ENCODE measurements at regions of chr16 and their contacts with region 1.

Region 1: GRCh38 chr16:22190081-22190775 is 15.8 kb upstream of the EEF2K start:
- DNase-seq: no peak
- ATAC-seq: peak; percentile 75
- H3K4me3 ChIP-seq: peak overlapping the region; percentile 51 to 67
- H3K27ac ChIP-seq: peak overlapping the region; percentile 67
- H3K4me1 ChIP-seq: peaks cover 20 to 32% of the 10 kb centered on the region in 2 experiments
- H3K27me3 ChIP-seq: no peaks in the 10 kb centered on the region
- CTCF ChIP-seq: no peak
- POLR2A ChIP-seq: no peak
- RAD21 ChIP-seq: no peak

Region 2: DNA sequence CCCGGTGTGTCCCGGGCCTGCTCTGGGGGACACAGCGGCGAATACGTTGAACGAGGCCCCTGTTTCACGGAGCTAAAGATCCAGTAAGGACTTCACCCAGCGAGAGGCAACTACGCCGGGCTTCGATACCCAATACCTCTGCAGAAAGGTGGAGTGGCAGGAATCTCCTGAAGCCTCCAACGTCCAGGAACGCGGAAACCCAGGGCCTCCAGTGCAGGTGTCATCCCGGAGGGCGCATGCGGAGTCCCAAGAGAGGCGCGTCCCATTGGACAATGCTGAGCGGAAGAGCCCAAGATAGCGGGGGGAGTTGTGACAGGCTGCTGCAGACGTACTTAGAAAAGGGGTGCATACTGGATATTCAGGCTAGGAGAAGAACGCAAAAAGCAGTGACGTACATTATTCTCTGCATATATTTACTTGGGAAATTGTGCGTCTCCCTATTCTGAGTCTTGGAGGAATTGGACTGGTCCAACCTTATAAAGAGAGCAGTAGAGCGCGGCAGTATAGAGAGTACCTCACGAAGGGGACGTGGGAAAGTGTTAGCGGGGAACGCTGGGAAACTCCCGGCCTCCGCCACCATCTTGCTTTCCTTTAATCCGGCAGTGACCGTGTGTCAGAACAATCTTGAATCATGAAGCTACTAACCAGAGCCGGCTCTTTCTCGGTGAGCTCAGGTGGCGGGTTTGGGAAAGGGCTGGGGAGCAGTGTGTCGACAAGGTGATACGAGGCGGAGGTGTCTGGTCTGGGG is 237.3 kb before region 1 on chr16 and contains the start of gene UQCRC2:
- CTCF ChIA-PET with region 1: interaction called, 42 read pairs
- POLR2A ChIA-PET with region 1: interaction called, 8 read pairs
- RAD21 ChIA-PET with region 1: interaction called in 1 of 2 experiments, 5 read pairs
- intact Hi-C with region 1: loop called (anchors 1 kb)
- DNase-seq: peak; percentile 93
- ATAC-seq: peak; percentile 93
- H3K4me3 ChIP-seq: peak within 1 kb of the TSS; percentile 96 to 98
- H3K27ac ChIP-seq: peak within 1 kb of the TSS; percentile 76
- H3K4me1 ChIP-seq: peaks cover 9 to 19% of the 10 kb centered on the region in 2 experiments
- H3K27me3 ChIP-seq: no peaks in the 10 kb centered on the region
- CTCF ChIP-seq: no peak
- POLR2A ChIP-seq: peak; percentile 67
- RAD21 ChIP-seq: no peak
- total RNA-seq, gene UQCRC2: 249 TPM

Region 3: DNA sequence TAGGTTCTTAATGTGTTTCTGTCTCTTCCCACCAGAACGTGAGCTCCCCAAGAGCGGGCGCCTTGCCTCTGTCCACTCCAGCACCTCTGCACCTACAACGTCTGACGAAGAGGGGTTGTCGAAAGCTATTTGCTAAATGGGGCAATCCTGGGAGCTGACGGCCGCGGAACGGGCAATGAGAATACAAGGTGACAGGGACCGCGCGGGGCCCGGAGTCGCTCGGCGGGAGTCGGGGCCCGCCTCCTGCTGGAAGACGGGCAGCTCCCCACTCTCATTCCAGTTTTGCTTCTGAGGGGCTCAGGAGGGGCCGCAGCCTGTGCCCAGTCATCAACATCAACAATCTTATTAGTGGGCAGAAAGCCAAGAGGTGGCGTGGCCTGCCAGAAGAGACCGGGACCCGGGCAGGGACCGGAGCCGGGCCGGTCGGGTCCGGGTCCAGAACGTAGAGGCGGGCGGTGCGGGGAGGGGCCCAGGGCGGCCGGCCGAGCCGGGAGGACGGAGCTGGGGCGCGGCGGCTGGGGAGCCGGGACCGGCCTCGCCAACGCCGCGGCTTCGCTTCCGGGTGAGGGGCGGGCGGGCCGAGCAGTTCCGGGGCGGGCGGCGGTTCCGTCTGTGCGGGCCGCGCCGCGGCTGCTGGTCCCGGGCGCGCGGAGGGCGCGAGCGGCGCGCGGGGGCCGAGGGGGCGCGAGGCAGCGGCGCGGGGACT is 182.6 kb before region 1 on chr16 and contains the start of gene MOSMO:
- CTCF ChIA-PET with region 1: interaction called, 15 read pairs
- POLR2A ChIA-PET with region 1: interaction called, 4 read pairs
- RAD21 ChIA-PET with region 1: interaction called in 1 of 2 experiments, 7 read pairs
- intact Hi-C with region 1: loop called (anchors 1 kb)
- DNase-seq: no peak
- ATAC-seq: peak; percentile 85
- H3K4me3 ChIP-seq: peak within 1 kb of the TSS; percentile 88 to 90
- H3K27ac ChIP-seq: peak within 1 kb of the TSS; percentile 85
- H3K4me1 ChIP-seq: peaks cover 17 to 42% of the 10 kb centered on the region in 2 experiments
- H3K27me3 ChIP-seq: no peaks in the 10 kb centered on the region
- CTCF ChIP-seq: no peak
- POLR2A ChIP-seq: no peak
- RAD21 ChIP-seq: no peak
- total RNA-seq, gene MOSMO: 27.6 TPM

Region 4: DNA sequence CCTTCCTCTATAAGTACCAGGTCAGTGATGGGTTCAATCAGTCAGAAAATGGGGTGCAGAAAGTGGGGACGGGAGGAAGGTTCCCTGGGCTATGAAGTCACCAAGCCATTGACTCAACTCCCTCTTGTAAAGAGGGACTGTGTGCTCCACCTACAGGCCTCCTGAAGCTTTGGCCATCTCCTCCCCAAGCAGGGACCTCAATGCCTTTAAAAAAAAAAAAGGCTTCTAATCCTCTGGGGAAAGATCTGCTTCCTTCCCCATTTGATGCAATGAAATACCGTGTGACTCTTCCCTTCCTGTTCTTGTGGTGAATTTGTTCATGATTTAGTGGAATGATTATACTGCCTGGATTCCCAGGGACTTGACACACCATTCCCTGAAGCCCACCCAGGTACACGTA is 67.1 kb before region 1 on chr16:
- CTCF ChIA-PET with region 1: interaction called, 3 read pairs
- POLR2A ChIA-PET with region 1: no interaction called
- RAD21 ChIA-PET with region 1: no interaction called
- intact Hi-C with region 1: loop called (anchors 10 kb)
- DNase-seq: peak; percentile 2
- ATAC-seq: peak; percentile 84
- H3K4me3 ChIP-seq: no peak overlapping the region
- H3K27ac ChIP-seq: no peak overlapping the region
- H3K4me1 ChIP-seq: no peaks in the 10 kb centered on the region
- H3K27me3 ChIP-seq: no peaks in the 10 kb centered on the region; the same call in 1 of the 2 replicates
- CTCF ChIP-seq: peak; percentile 6 to 35 (median 33); a peak in 4 of 6 replicates
- POLR2A ChIP-seq: no peak
- RAD21 ChIP-seq: peak; percentile 35; the same call in 1 of the 2 replicates

Region 5: DNA sequence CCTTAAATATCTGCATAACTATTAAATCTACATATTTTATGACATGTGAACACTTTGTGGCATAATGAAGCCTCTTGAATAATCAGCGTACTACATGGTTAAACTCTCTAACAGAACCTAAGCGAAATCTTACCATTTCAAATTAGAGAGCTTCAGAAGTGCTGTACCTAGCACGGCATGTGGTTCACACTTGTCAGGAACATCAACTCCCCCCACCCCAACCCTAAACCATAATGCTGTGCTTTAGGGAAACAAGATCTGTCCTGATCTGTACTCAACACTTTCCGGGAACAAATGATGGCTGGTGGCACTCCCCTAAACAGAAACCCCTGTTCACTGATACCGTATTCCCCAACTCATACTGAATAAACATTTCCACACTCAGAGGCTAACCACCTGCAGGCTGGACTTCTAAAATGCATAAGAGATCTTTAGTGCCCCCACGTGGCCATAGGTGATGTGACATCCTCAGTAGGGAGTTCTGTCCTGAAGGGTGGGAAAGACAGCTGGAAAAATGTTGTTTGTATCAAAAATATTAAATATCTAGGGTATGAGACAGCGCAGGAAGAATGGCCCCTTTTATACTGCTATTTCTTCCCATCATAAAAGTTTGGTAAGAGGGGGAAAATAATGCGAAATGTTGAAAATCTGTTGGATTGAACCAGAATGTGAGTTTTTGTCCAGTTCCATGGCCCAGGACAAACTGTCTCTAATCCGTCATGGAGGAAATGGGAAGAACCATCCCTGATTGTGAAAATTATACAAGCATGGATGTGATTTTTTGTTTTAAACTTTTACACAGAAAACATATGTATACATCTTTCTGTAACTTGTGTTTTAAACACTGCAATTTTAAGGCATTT is 870.5 kb after region 1 on chr16:
- CTCF ChIA-PET with region 1: no interaction called
- POLR2A ChIA-PET with region 1: no interaction called
- RAD21 ChIA-PET with region 1: no interaction called
- intact Hi-C with region 1: loop called (anchors 5 kb)
- DNase-seq: peak; percentile 47
- ATAC-seq: peak; percentile 97
- H3K4me3 ChIP-seq: no peak overlapping the region
- H3K27ac ChIP-seq: no peak overlapping the region
- H3K4me1 ChIP-seq: no peaks in the 10 kb centered on the region
- H3K27me3 ChIP-seq: peaks cover 5% of the 10 kb centered on the region; the same call in 1 of the 2 replicates
- CTCF ChIP-seq: peak; percentile 64 to 87 (median 84)
- POLR2A ChIP-seq: no peak
- RAD21 ChIP-seq: peak; percentile 71

Measured in HCT116 (cell line).